Activated naive CD4-positive, alpha-beta T cell treated with anti-CD3 and anti-CD28 coated beads for 36 hours (primary cell): ENCODE measurements at regions of chr12 and their contacts with region 1.

Region 1: GRCh38 chr12:3885277-3886094 is 12.3 kb upstream of the PARP11 start:
- DNase-seq: peak; percentile 58
- H3K4me3 Mint-ChIP-seq: no peak overlapping the region
- H3K27ac Mint-ChIP-seq: peak overlapping the region; percentile 19
- H3K4me1 Mint-ChIP-seq: peaks cover 7% of the 10 kb centered on the region
- H3K27me3 Mint-ChIP-seq: no peaks in the 10 kb centered on the region

Region 2: GRCh38 chr12:3964439-3964838 is 79.0 kb after region 1 on chr12:
- CTCF ChIA-PET with region 1: interaction called, 100 read pairs
- intact Hi-C with region 1: loop called (anchors 1 kb)
- DNase-seq: peak; percentile 48
- H3K4me3 Mint-ChIP-seq: no peak overlapping the region
- H3K27ac Mint-ChIP-seq: no peak overlapping the region
- H3K4me1 Mint-ChIP-seq: peaks cover 20% of the 10 kb centered on the region
- H3K27me3 Mint-ChIP-seq: no peaks in the 10 kb centered on the region

Region 3: GRCh38 chr12:3988519-3989448 is 103.3 kb after region 1 on chr12:
- CTCF ChIA-PET with region 1: interaction called, 44 read pairs
- intact Hi-C with region 1: no loop called
- DNase-seq: peak; percentile 54
- H3K4me3 Mint-ChIP-seq: peak overlapping the region; percentile 20
- H3K27ac Mint-ChIP-seq: peak overlapping the region; percentile 67
- H3K4me1 Mint-ChIP-seq: peaks cover 32% of the 10 kb centered on the region
- H3K27me3 Mint-ChIP-seq: no peaks in the 10 kb centered on the region

Region 4: GRCh38 chr12:4037747-4038312 is 152.3 kb after region 1 on chr12:
- CTCF ChIA-PET with region 1: interaction called, 112 read pairs
- intact Hi-C with region 1: loop called (anchors 1 kb)
- DNase-seq: peak; percentile 51
- H3K4me3 Mint-ChIP-seq: no peak overlapping the region
- H3K27ac Mint-ChIP-seq: no peak overlapping the region
- H3K4me1 Mint-ChIP-seq: peaks cover 4% of the 10 kb centered on the region
- H3K27me3 Mint-ChIP-seq: no peaks in the 10 kb centered on the region